Endothelial cell of umbilical vein (primary cell): ENCODE measurements at regions of chr11 and their contacts with region 1.

Region 1: DNA sequence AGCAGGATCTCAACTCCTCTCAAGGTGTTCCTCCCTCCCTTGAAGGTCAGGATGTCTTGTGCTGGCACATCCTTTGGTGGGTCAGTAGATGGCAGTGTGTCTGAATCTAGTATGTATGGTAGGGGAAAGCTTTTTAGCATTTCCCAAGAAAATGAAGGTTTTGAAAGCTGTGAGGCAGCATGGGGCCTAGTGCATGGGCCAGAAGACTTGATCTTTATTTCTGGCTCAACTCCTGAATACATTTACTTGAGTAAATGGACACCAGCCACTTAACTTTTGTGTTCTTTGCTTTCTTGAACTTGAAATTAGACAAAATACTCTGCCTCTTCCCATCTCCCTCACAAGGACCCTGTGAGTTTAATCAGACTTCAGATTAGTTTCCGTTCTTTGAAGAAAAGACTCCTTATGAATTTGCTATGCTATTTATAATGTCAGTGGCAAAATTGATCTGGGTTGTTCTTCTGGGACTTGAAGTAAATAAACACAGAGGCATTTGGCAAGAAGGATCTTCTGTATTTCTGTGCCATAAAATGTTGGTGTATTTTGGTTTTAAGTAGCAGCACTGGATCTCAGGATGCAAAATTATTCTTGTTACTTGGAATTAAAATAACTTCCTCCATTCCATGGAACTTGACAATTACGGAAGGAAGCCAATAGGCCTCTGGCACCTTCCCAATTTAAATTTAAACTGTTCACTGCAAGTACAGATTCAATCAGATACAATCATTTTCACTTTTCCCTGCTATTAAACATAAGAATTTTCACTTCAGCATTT is 288.8 kb downstream of the CASP12 start:
- DNase-seq: peak; percentile 80
- H3K4me3 ChIP-seq: no peak overlapping the region
- H3K27ac ChIP-seq: no peak overlapping the region
- H3K4me1 ChIP-seq: peaks cover 8% of the 10 kb centered on the region
- H3K27me3 ChIP-seq: no peaks in the 10 kb centered on the region
- CTCF ChIP-seq: peak; percentile 69 to 74
- POLR2A ChIP-seq: no peak

Region 2: GRCh38 chr11:104623518-104623917 is 14.0 kb after region 1 on chr11:
- CTCF ChIA-PET with region 1: interaction called, 11 read pairs
- POLR2A ChIA-PET with region 1: interaction called, 3 read pairs
- dilution Hi-C with region 1: no loop called
- intact Hi-C with region 1: no loop called
- DNase-seq: peak; percentile 32
- H3K4me3 ChIP-seq: no peak overlapping the region
- H3K27ac ChIP-seq: no peak overlapping the region
- H3K4me1 ChIP-seq: peaks cover 5% of the 10 kb centered on the region
- H3K27me3 ChIP-seq: no peaks in the 10 kb centered on the region
- CTCF ChIP-seq: no peak
- POLR2A ChIP-seq: no peak

Region 3: DNA sequence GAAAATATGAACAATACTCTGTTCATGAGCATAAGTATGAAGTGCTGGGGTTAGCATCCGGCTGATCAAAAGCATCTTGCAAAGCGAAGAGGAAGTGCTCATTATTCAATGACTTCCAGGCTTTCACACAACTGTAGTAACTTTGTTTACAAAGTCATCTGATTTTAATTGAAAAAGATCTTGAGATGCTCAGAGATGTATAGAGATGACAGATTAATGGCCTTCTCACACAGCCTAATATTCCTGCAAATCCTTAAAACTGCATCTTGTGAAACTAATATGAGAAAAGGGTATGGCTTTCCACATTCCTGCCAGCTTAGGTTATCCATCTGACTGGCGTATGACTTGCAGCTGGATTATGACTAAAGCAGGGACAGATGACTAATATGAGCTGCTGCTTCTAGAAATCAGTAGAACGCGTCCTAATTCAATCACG is 163.3 kb after region 1 on chr11:
- CTCF ChIA-PET with region 1: no interaction called
- POLR2A ChIA-PET with region 1: no interaction called
- dilution Hi-C with region 1: no loop called
- intact Hi-C with region 1: loop called (anchors 5 kb)
- DNase-seq: peak; percentile 88
- H3K4me3 ChIP-seq: no peak overlapping the region
- H3K27ac ChIP-seq: peak overlapping the region; percentile 53
- H3K4me1 ChIP-seq: peaks cover 17% of the 10 kb centered on the region
- H3K27me3 ChIP-seq: no peaks in the 10 kb centered on the region
- CTCF ChIP-seq: no peak
- POLR2A ChIP-seq: peak; percentile 20

Region 4: GRCh38 chr11:104946907-104947306 is 337.4 kb after region 1 on chr11:
- CTCF ChIA-PET with region 1: interaction called, 5 read pairs
- POLR2A ChIA-PET with region 1: no interaction called
- dilution Hi-C with region 1: no loop called
- intact Hi-C with region 1: loop called (anchors 5 kb)
- DNase-seq: peak; percentile 74
- H3K4me3 ChIP-seq: no peak overlapping the region
- H3K27ac ChIP-seq: no peak overlapping the region
- H3K4me1 ChIP-seq: no peaks in the 10 kb centered on the region
- H3K27me3 ChIP-seq: no peaks in the 10 kb centered on the region
- CTCF ChIP-seq: peak; percentile 33 to 35
- POLR2A ChIP-seq: no peak